K562 (cell line): ENCODE measurements at regions of chr15 and their contacts with region 1.

Region 1: DNA sequence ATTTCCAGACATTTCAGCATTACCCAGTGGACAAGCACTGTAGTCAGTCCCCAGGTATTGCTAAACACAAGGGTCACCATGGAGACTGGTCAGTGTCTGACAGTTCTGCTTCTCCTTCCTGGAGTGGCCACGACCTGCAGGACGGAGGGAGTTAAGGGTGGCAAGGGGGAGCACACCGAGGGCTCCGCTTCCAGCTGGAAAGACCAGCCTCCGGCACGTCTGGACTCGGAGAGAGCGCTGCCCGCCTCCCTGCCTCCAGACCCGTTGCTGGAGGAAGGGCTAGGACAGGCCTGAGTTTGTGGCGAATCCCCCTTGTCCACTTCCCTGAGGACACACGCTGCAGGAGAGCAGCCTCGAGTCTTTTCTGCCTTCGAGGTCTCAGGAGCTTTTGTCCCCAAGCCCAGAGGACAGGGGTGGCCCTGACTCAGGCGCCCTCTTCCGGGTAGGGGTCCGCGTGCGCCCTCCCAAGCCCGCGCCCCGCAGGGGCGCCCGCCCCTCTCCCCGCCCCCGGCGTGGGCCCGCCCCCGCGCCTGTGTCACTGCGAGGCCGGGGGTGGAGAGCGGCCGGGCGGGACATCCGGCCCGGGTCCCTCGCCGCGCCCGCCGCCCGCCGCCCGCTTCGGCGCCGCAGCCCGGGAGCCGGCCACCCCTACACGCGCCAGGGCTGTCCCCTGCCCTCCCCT is at the start of gene CHST14:
- DNase-seq: peak in 2 of 4 experiments; percentile 77 to 89
- ATAC-seq: peak; percentile 82
- H3K4me3 ChIP-seq: peak within 1 kb of the TSS; percentile 53
- H3K27ac ChIP-seq: peak within 1 kb of the TSS; percentile 74
- H3K4me1 ChIP-seq: peaks cover 35 to 51% of the 10 kb centered on the region in 2 experiments
- H3K27me3 ChIP-seq: no peaks in the 10 kb centered on the region
- CTCF ChIP-seq: peak in 1 of 3 experiments; percentile 16; a peak in 2 of 6 replicates
- EP300 ChIP-seq: no peak
- POLR2A ChIP-seq: 0 out of 2 replicates have a peak, but pooled peaks have one; percentile 39
- RAD21 ChIP-seq: no peak
- polyA plus RNA-seq, gene CHST14: 1.6 to 2.3 TPM

Region 2: GRCh38 chr15:40398413-40398873 is 72.1 kb before region 1 on chr15:
- CTCF ChIA-PET with region 1: no interaction called
- POLR2A ChIA-PET with region 1: no interaction called
- in situ Hi-C with region 1: no loop called
- intact Hi-C with region 1: no loop called
- DNase-seq: no peak
- ATAC-seq: no peak; the same call in 2 of the 3 replicates
- H3K4me3 ChIP-seq: no peak overlapping the region
- H3K27ac ChIP-seq: no peak overlapping the region
- H3K4me1 ChIP-seq: no peaks in the 10 kb centered on the region
- H3K27me3 ChIP-seq: no peaks in the 10 kb centered on the region
- CTCF ChIP-seq: no peak
- EP300 ChIP-seq: no peak
- POLR2A ChIP-seq: no peak
- RAD21 ChIP-seq: no peak

Region 3: DNA sequence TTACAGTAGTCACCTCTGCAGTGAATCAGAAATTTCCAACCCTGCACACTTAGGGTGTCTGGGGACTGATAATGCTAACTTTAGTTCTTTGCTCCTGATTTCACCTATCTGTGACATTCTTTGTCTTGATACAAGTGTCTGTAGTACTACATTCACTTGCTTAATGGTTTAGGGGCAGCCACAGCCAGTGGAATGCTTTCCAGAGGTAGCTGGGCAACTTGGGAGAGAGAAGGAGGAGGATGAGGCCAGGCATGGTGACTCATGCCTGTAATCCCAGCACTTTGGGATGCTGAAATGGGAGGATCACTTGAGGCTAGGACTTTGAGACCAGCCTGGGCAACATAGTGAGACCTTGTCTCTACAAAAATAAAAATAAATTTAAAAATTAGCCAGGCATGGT is 21.3 kb before region 1 on chr15:
- CTCF ChIA-PET with region 1: no interaction called
- POLR2A ChIA-PET with region 1: interaction called, 15 read pairs
- in situ Hi-C with region 1: no loop called
- intact Hi-C with region 1: no loop called
- DNase-seq: no peak
- ATAC-seq: no peak
- H3K4me3 ChIP-seq: no peak overlapping the region
- H3K27ac ChIP-seq: no peak overlapping the region
- H3K4me1 ChIP-seq: peaks cover 21 to 30% of the 10 kb centered on the region in 2 experiments
- H3K27me3 ChIP-seq: no peaks in the 10 kb centered on the region
- CTCF ChIP-seq: no peak
- EP300 ChIP-seq: no peak
- POLR2A ChIP-seq: no peak
- RAD21 ChIP-seq: no peak

Region 4: GRCh38 chr15:40493089-40493840 is 22.7 kb after region 1 on chr15:
- CTCF ChIA-PET with region 1: no interaction called
- POLR2A ChIA-PET with region 1: no interaction called
- in situ Hi-C with region 1: no loop called
- intact Hi-C with region 1: no loop called
- DNase-seq: no peak
- ATAC-seq: no peak
- H3K4me3 ChIP-seq: no peak overlapping the region
- H3K27ac ChIP-seq: no peak overlapping the region
- H3K4me1 ChIP-seq: peaks cover 2 to 4% of the 10 kb centered on the region in 2 experiments; a peak in 4 of 5 replicates
- H3K27me3 ChIP-seq: no peaks in the 10 kb centered on the region; a peak in 1 of 5 replicates
- CTCF ChIP-seq: no peak
- EP300 ChIP-seq: no peak
- POLR2A ChIP-seq: no peak
- RAD21 ChIP-seq: no peak

Region 5: GRCh38 chr15:40506964-40507571 is 36.5 kb after region 1 on chr15:
- CTCF ChIA-PET with region 1: no interaction called
- POLR2A ChIA-PET with region 1: interaction called, 4 read pairs
- in situ Hi-C with region 1: no loop called
- intact Hi-C with region 1: loop called (anchors 5 kb)
- DNase-seq: peak; percentile 78 to 93 (median 86)
- ATAC-seq: peak; percentile 93
- H3K4me3 ChIP-seq: no peak overlapping the region
- H3K27ac ChIP-seq: peak overlapping the region; percentile 34; the same call in 1 of the 3 replicates
- H3K4me1 ChIP-seq: peaks cover 19 to 20% of the 10 kb centered on the region in 2 experiments
- H3K27me3 ChIP-seq: no peaks in the 10 kb centered on the region
- CTCF ChIP-seq: peak; percentile 81 to 94 (median 89)
- EP300 ChIP-seq: peak; percentile 32; the same call in 1 of the 2 replicates
- POLR2A ChIP-seq: peak; percentile 49
- RAD21 ChIP-seq: peak; percentile 47 to 80

Region 6: DNA sequence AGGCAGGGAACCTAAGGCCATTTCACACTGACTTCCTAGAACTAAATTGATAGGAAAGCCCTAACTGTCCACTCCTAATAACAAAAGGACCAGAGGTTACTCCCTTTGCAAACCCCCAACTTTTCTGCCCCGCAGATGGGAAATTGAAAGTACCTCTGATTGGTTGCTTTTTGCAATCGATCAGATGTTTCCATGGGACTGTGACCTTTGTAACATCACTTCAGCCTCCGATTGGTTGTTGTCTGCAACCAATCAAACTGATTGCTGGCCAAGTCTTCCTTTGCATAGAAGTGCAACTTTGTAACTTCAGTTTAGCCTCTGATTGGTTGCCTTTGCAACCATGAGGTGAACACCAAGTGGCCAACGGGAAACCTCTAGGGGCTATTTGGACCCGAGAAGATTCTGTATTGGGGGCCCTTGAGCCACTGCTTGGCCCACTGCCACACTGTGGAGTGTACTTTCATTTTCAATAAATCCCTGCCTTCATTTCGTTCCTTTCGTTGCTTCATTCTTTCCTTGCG is 112.2 kb after region 1 on chr15:
- CTCF ChIA-PET with region 1: no interaction called
- POLR2A ChIA-PET with region 1: no interaction called
- in situ Hi-C with region 1: no loop called
- intact Hi-C with region 1: no loop called
- DNase-seq: peak; percentile 26 to 68 (median 44)
- ATAC-seq: peak; percentile 87
- H3K4me3 ChIP-seq: peak overlapping the region; percentile 31
- H3K27ac ChIP-seq: peak overlapping the region; percentile 67; the same call in 2 of the 3 replicates
- H3K4me1 ChIP-seq: peaks cover 0 to 2% of the 10 kb centered on the region in 2 experiments; a peak in 1 of 5 replicates
- H3K27me3 ChIP-seq: no peaks in the 10 kb centered on the region
- CTCF ChIP-seq: no peak
- EP300 ChIP-seq: no peak
- POLR2A ChIP-seq: no peak
- RAD21 ChIP-seq: no peak